Activated T-helper 1 cell treated with anti-CD3 and anti-CD28 coated beads, Interleukin-12 subunit alpha, Interleukin-12 subunit beta, Interleukin-2, Interleukin-4 antibody, amounts not matched to agents 30 ng/mL and 10 ng/mL and 1 ng/mL, durations not matched to agents 14 hours and 24 hours and 36 hours (primary cell): ENCODE measurements at regions of chr1 and their contacts with region 1.

Region 1: DNA sequence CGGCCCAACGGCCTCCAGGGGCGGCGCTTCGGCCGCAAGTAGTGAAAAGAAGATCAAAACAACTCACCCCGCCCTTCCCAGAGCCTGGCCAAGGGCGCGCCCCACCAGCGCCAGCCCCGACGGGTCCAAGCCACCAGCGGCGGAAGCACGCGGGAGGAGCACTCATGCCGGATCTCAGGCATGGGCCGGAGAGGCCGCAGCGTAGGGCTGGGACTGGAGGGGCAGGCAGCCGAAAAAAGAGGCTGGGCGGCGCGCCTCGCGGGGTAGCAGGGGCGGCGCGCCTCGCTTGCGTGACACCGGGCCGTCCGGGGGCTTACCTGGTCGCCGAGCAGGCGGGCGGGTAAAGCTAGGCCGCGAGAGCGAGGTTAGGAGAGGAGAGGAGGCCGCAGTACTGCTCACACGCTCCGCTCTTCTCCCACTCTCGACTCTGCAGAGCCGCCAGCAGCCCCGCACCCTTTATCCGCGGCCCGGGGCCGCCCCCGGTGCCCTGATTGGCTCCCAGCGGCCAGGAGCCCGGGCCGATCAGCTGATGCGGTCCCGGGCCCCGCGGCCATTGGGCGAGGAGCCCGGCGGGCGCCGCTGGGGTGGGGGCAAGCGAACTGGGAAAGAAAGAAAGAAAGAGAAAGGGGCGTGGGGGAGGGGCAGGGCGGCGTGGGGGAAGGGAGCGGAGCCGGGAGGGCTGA is at the start of gene GLUL:
- DNase-seq: peak; percentile 82
- H3K4me3 Mint-ChIP-seq: peak within 1 kb of the TSS; percentile 99
- H3K27ac Mint-ChIP-seq: peak within 1 kb of the TSS; percentile 90
- H3K4me1 Mint-ChIP-seq: peaks cover 46% of the 10 kb centered on the region
- H3K27me3 Mint-ChIP-seq: peaks cover 12% of the 10 kb centered on the region
- total RNA-seq, gene GLUL: 89.6 and 101 TPM in 2 replicates

Region 2: GRCh38 chr1:182149411-182149965 is 242.0 kb before region 1 on chr1:
- intact Hi-C with region 1: loop called (anchors 1 kb)
- DNase-seq: peak; percentile 60
- H3K4me3 Mint-ChIP-seq: peak overlapping the region; percentile 65
- H3K27ac Mint-ChIP-seq: peak overlapping the region; percentile 88
- H3K4me1 Mint-ChIP-seq: peaks cover 51% of the 10 kb centered on the region
- H3K27me3 Mint-ChIP-seq: no peaks in the 10 kb centered on the region

Region 3: DNA sequence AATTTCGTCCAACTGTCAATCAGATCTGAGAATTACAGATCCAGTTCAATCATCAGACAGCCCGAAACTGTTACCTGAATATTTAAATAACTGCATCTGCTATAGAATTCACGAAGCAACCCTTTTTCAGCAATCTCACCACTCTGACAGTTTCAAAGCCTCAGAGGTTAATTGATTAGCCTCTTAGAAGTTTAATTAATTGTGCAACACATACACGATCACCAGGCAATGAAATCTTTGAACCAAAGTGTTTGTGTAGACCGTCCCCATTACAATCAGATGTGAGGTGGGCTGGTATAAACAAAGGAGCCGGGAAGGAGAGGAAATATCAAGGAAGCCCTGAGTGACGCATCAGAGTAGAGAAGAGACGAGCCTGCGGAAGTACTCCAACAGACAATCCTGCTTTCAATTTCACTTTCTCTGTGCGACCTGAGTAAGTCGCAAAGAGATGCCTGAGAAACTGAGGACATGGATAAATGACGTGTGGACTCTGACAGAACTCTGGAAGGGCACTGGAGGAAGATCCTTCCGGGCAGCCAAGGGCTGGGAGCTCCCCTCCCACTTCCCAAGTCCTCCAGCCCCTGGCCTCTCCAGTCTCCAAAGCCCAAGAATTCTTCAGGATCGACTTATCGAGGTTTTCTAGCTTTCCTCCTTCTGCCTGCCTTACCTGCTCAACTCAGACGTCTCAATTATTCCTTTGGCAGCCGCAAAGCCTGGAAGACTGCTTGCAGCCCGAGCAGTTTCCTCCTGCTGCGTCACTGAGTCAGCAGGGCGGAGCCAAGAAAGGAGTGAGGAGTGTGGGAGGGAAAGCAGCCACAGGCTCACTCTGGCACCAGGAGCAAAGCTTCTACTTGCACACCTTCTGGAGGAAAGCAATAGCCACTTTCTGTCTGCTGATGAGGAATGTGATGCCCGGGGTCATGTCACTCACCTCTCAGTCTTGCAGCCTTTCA is 197.3 kb after region 1 on chr1 and contains the start of gene RNASEL:
- intact Hi-C with region 1: loop called (anchors 2 kb)
- DNase-seq: peak; percentile 43
- H3K4me3 Mint-ChIP-seq: peak within 1 kb of the TSS; percentile 98
- H3K27ac Mint-ChIP-seq: peak within 1 kb of the TSS; percentile 98
- H3K4me1 Mint-ChIP-seq: peaks cover 44% of the 10 kb centered on the region
- H3K27me3 Mint-ChIP-seq: no peaks in the 10 kb centered on the region
- total RNA-seq, gene RNASEL: 4.6 and 5.0 TPM in 2 replicates

Region 4: GRCh38 chr1:182595641-182596240 is 204.2 kb after region 1 on chr1:
- intact Hi-C with region 1: loop called (anchors 2 kb)
- DNase-seq: peak; percentile 34
- H3K4me3 Mint-ChIP-seq: no peak overlapping the region
- H3K27ac Mint-ChIP-seq: no peak overlapping the region
- H3K4me1 Mint-ChIP-seq: peaks cover 16% of the 10 kb centered on the region
- H3K27me3 Mint-ChIP-seq: peaks cover 2% of the 10 kb centered on the region